ENCODE measurements at regions of chr9 and their contacts with region 1.

Region 1: GRCh38 chr9:15211160-15211814 is 95.7 kb downstream of the TTC39B start:
- DNase-seq: peak; percentile 50
- ATAC-seq: peak; percentile 73
- H3K4me3 ChIP-seq: no peak overlapping the region
- H3K27ac ChIP-seq: no peak overlapping the region
- H3K4me1 ChIP-seq: no peaks in the 10 kb centered on the region
- H3K27me3 ChIP-seq: no peaks in the 10 kb centered on the region
- CTCF ChIP-seq: peak; percentile 62 to 92 (median 91); a peak in 5 of 6 replicates
- POLR2A ChIP-seq: no peak
- RAD21 ChIP-seq: peak; percentile 67

Region 2: GRCh38 chr9:15231788-15232635 is 20.7 kb after region 1 on chr9:
- CTCF ChIA-PET with region 1: interaction called, 15 read pairs
- POLR2A ChIA-PET with region 1: interaction called, 4 read pairs
- RAD21 ChIA-PET with region 1: no interaction called
- intact Hi-C with region 1: no loop called
- DNase-seq: peak; percentile 29
- ATAC-seq: peak; percentile 97
- H3K4me3 ChIP-seq: no peak overlapping the region
- H3K27ac ChIP-seq: no peak overlapping the region
- H3K4me1 ChIP-seq: no peaks in the 10 kb centered on the region
- H3K27me3 ChIP-seq: no peaks in the 10 kb centered on the region
- CTCF ChIP-seq: peak; percentile 32 to 80 (median 77); a peak in 4 of 6 replicates
- POLR2A ChIP-seq: no peak
- RAD21 ChIP-seq: peak; percentile 35; the same call in 1 of the 2 replicates

Region 3: DNA sequence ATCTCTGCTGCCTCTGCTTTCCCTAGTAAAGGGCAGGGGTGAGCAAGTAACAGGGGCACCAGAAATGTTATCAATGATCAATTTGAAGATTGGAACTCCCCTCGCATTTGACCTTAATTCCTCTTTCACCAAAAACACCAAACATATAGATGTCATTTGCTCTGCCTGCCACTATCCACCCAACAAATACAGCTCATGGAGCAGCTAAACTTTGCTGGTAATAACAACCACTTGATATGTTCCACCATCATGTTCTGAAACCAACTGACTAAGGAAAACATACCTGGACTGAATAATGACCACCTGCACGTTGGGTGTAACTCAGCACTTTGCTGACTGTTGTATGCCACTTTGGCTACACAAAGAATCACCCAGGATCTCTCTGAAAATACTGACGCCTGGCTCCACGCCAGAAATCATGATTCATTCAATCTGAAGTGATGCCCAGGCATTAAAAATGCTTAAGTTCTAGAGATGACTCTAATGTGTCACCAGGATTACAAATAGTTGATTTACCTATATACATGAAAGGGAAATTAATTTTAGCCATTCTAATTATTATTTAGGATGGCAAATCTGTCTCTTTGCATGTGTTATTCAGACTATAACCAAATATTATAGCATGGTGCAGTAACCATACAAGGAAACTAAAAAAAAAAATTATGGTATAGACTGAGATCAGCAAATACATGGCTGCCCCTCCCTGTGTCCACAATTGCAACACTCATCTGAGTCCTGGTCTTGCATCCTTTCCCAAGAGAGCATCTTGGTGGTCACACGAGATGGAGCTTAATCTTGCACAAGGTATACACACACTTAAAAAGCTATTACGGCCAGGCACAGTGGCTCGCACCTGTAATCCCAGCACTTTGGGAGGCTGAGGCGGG is 138.8 kb after region 1 on chr9:
- CTCF ChIA-PET with region 1: no interaction called
- POLR2A ChIA-PET with region 1: no interaction called
- RAD21 ChIA-PET with region 1: no interaction called
- intact Hi-C with region 1: no loop called
- DNase-seq: no peak
- ATAC-seq: no peak
- H3K4me3 ChIP-seq: no peak overlapping the region
- H3K27ac ChIP-seq: no peak overlapping the region
- H3K4me1 ChIP-seq: no peaks in the 10 kb centered on the region
- H3K27me3 ChIP-seq: no peaks in the 10 kb centered on the region
- CTCF ChIP-seq: no peak
- POLR2A ChIP-seq: no peak
- RAD21 ChIP-seq: no peak

Region 4: DNA sequence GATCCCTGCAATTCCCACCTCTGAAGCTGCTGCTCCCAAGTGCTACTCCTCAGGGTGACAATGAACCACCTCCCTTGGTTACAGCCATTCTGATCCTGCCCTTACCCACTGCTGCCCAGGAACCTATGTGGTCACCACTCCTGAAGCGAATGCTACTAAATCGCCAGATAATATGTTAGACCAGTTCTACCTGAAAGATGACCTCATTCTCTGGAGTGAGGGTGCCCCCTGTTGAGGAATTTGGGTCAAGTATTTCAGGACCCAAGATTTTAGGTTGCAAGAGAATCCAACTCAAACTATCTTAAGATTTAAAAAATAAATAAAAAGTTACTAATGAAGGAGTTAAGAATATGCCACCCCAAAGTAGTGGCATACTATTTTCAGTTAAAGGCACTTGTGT is 205.6 kb after region 1 on chr9:
- CTCF ChIA-PET with region 1: no interaction called
- POLR2A ChIA-PET with region 1: no interaction called
- RAD21 ChIA-PET with region 1: no interaction called
- intact Hi-C with region 1: loop called (anchors 1 kb)
- DNase-seq: no peak
- ATAC-seq: peak; percentile 74; the same call in 1 of the 2 replicates
- H3K4me3 ChIP-seq: no peak overlapping the region
- H3K27ac ChIP-seq: no peak overlapping the region
- H3K4me1 ChIP-seq: peaks cover 0 to 4% of the 10 kb centered on the region in 2 experiments; a peak in 2 of 4 replicates
- H3K27me3 ChIP-seq: no peaks in the 10 kb centered on the region
- CTCF ChIP-seq: peak; percentile 20 to 55 (median 43); a peak in 3 of 6 replicates
- POLR2A ChIP-seq: no peak
- RAD21 ChIP-seq: peak; percentile 74

Region 5: GRCh38 chr9:15485836-15486666 is 274.8 kb after region 1 on chr9:
- CTCF ChIA-PET with region 1: no interaction called
- POLR2A ChIA-PET with region 1: no interaction called
- RAD21 ChIA-PET with region 1: no interaction called
- intact Hi-C with region 1: loop called (anchors 5 kb)
- DNase-seq: no peak
- ATAC-seq: peak; percentile 54; the same call in 1 of the 2 replicates
- H3K4me3 ChIP-seq: no peak overlapping the region
- H3K27ac ChIP-seq: no peak overlapping the region
- H3K4me1 ChIP-seq: no peaks in the 10 kb centered on the region
- H3K27me3 ChIP-seq: no peaks in the 10 kb centered on the region
- CTCF ChIP-seq: peak; percentile 5 to 52 (median 42); a peak in 3 of 6 replicates
- POLR2A ChIP-seq: no peak
- RAD21 ChIP-seq: peak; percentile 34

Region 6: DNA sequence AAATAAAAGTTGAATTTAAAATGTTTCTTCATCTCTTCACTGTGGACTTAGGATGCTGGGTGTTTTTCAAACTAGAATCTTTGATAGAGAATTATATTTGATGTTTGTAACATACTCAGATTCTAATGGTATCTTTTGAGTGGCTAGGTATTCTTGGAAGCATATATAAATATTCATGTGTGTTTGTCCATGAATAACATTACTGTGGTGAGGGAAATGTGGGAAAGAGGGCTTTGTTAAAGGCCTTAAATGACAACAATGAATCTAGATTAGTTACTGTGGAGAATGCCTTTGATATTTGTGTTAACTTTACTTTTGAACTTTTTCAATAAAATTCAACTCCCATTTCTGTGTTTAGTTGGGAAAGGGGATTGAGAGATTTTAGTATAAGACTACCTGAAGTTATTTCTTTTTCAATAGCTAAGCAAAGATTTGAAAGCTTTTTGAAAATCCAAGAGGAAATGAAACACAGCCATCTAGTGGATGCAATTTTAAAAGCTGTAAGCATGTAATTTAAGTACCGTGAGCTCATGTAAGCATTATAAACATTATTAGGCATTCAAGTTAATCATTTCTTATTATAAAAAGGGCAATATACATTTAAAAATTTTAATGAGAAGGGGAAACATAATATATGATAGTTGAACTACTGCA is 411.2 kb after region 1 on chr9:
- CTCF ChIA-PET with region 1: interaction called, 10 read pairs
- POLR2A ChIA-PET with region 1: no interaction called
- RAD21 ChIA-PET with region 1: no interaction called
- intact Hi-C with region 1: no loop called
- DNase-seq: peak; percentile 15
- ATAC-seq: no peak
- H3K4me3 ChIP-seq: no peak overlapping the region
- H3K27ac ChIP-seq: no peak overlapping the region
- H3K4me1 ChIP-seq: no peaks in the 10 kb centered on the region
- H3K27me3 ChIP-seq: no peaks in the 10 kb centered on the region
- CTCF ChIP-seq: peak; percentile 19 to 65 (median 45); a peak in 4 of 6 replicates
- POLR2A ChIP-seq: no peak
- RAD21 ChIP-seq: peak; percentile 56